Dorsolateral prefrontal cortex (tissue), 120 donors: ENCODE measurements at regions of chr20 and their contacts with region 1.

Region 1: DNA sequence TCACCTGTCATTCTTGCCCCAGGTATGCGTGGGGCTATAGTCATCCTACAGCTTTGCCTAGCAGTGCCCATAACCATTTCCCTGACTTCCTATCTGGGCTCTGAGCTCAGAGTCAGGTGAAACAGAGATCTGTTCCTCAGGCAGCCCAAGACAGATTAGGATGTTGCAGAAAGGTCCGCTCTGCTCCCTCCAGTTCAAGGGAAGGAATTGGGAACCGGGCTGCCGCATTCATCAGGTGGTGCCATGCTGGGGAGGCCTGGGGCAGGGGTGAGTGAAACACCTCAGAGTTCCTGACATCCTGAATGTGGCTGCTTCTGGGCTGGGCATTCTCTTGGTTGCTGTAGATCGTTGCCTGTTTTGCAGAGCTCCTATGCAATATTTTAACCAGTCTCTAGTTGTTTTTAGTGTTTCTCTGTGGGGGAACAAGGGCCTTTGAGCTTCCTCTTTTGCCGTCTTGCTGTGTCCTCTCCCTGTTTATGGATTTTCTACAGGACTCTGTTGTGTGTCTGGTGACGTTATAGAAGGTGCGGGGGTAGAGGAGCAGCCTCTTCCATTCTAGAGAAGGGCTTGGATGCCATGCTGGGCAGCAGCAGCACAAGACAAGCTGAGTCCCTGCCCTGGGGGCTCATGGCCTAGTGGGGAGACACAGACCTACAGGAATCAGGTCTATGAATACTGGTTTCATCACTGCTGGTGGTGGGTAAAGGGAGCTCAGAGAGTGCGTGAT is 9.2 kb downstream of the ENTPD6 start:
- DNase-seq: peak in 1 of 10 donors; percentile 13
- H3K4me3 ChIP-seq: no peak overlapping the region
- H3K27ac ChIP-seq: peak overlapping the region in 11 of 59 donors; percentile 0 to 59 (median 17)
- H3K27me3 ChIP-seq: no peaks in the 10 kb centered on the region
- CTCF ChIP-seq: no peak

Region 2: DNA sequence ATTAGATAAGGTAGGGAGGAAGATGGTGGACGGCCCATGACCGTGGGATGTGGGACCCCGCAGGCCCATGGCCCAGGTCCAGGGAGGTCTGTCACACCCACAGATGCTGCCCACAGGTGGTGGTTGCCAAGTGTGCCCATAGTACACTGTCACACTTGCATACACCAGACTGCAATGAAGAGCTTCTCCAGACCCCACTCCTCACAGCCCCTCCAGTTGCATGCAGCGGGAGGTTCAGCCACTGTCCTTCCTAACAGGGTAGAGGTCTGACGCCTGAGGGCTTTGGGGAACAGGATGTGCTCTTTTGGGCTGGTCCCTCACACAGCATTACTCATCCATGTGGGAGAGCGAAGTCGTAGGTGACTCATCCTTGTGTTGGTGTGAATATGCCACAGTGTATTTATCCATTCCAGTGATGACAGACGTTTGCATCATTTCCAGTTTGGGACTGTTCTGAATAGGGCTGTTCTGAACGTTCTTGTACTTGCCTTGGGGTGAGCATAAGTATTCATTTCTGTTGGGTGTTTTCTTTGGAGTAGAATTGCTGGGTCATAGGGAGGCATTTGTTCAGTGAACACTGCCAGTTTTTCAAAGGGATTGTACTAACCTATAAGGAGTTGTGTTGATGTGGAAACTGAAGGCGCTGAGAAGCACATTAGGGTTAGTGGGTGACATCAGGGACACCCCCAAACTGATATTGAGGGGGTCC is 33.1 kb after region 1 on chr20:
- intact Hi-C with region 1: loop called in 1 of 2 experiments (anchors 5 kb)
- DNase-seq: peak in 4 of 10 donors; percentile 37 to 72 (median 70)
- H3K4me3 ChIP-seq: no peak overlapping the region
- H3K27ac ChIP-seq: peak overlapping the region in 27 of 59 donors; percentile 8 to 83 (median 55)
- H3K27me3 ChIP-seq: no peaks in the 10 kb centered on the region
- CTCF ChIP-seq: no peak